ENCODE measurements at regions of chr1 and their contacts with region 1.

Region 1: GRCh38 chr1:2429780-2430591 is 17.6 kb upstream of the PEX10 start:
- DNase-seq: no peak
- H3K4me3 ChIP-seq: no peak overlapping the region
- H3K27ac ChIP-seq: no peak overlapping the region
- H3K4me1 ChIP-seq: peaks cover 0 to 3% of the 10 kb centered on the region in 2 experiments; a peak in 1 of 4 replicates
- H3K27me3 ChIP-seq: peaks cover 11% of the 10 kb centered on the region
- CTCF ChIP-seq: peak; percentile 35; the same call in 1 of the 2 replicates
- EP300 ChIP-seq: no peak
- RAD21 ChIP-seq: no peak

Region 2: DNA sequence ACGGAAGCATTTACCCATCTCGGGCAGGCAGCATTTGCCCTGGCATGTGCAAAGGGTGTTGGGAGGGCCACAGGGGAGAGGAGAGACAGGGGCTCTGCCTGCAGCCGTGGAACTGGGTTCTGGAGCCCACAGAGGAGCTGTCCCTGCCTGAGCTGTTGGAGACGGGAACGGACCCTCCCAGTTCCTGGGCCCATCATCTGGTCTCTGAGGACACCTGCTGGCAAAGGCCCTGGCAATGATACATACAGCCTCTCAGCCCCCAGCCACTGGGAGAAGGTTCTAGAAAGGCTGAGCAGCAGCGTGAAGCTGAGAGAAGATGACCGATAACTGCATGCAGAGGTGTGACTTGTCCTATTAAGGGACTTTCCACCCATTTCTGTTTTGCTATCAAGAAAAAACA is 266.8 kb before region 1 on chr1:
- CTCF ChIA-PET with region 1: no interaction called
- POLR2A ChIA-PET with region 1: no interaction called
- DNase-seq: no peak
- H3K4me3 ChIP-seq: no peak overlapping the region; a peak in 1 of 4 replicates
- H3K27ac ChIP-seq: no peak overlapping the region
- H3K4me1 ChIP-seq: no peaks in the 10 kb centered on the region; a peak in 1 of 4 replicates
- H3K27me3 ChIP-seq: no peaks in the 10 kb centered on the region
- CTCF ChIP-seq: no peak
- EP300 ChIP-seq: no peak
- RAD21 ChIP-seq: no peak

Region 3: DNA sequence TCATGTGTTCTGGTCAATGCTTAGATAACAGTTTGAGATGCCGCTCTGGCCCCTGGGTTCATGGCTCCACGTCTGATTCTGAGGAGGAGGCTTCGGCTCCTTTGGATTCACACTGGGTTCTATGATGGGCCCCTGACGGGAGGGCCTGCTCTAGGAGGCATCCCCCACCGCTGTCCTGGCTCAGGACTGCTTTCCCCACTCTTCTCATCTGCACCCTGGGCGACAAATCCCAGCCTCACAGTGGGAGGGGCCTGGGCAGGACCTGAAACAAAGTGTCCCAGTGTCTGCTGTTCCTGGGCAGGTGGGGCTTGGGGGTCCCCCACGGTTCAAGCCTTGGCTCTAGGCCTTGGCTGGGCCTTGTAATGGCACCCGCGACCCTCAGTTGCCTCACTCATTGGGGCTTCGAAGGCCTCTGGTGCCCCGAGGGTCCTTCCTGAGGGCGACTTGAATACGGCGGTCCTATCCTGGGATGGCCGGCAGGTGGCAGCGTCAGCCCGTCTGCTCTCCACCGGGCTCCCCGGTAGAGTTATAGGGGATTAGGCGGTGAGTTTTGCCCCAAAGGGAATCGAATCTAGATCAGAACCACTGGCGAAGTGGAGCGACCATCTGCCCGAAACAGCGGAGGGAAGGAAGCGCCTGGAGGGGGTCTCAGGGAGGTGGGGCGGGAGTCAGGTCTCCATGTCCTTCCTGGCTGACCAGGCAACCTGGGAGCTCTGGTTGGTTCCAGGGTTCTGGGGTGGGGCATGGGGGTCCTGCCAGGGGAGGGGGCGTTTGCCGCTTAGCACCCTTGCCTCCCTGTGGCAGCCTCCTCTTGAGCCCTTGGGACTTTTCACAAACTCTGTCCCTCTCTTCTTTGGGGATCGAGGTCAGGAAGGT is 15.7 kb before region 1 on chr1:
- CTCF ChIA-PET with region 1: interaction called, 13 read pairs
- POLR2A ChIA-PET with region 1: interaction called, 4 read pairs
- DNase-seq: peak; percentile 91
- H3K4me3 ChIP-seq: peak overlapping the region in 1 of 2 experiments; percentile 49; a peak in 1 of 4 replicates
- H3K27ac ChIP-seq: no peak overlapping the region; a peak in 1 of 4 replicates
- H3K4me1 ChIP-seq: peaks cover 7 to 32% of the 10 kb centered on the region in 2 experiments; a peak in 1 of 4 replicates
- H3K27me3 ChIP-seq: peaks cover 18% of the 10 kb centered on the region
- CTCF ChIP-seq: peak; percentile 87
- EP300 ChIP-seq: no peak
- RAD21 ChIP-seq: peak; percentile 89

Region 4: DNA sequence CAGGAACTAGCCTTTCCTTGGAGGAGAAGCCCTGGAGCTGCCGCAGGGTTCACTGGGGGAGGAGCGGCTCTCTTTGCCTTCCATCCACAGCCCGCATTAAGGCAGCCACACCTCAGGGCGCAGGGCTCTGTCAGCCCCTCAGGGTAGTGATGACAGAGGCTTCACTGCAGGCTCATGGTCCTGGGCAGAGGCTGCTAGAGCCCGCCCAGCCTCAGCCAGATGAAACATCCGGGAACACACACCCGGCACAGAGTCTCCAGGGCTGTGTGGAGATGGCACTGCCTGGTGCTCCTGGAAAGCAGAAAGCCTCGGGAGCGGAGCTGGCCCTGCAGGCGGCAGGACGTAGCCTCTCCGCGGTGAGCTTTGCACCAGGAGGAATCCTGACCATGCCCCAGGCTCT is 11.8 kb after region 1 on chr1:
- CTCF ChIA-PET with region 1: interaction called, 13 read pairs
- POLR2A ChIA-PET with region 1: no interaction called
- DNase-seq: no peak
- H3K4me3 ChIP-seq: no peak overlapping the region
- H3K27ac ChIP-seq: no peak overlapping the region
- H3K4me1 ChIP-seq: no peaks in the 10 kb centered on the region
- H3K27me3 ChIP-seq: peaks cover 9% of the 10 kb centered on the region; the same call in 1 of the 2 replicates
- CTCF ChIP-seq: no peak
- EP300 ChIP-seq: no peak
- RAD21 ChIP-seq: no peak

Region 5: GRCh38 chr1:2650967-2651645 is 221.1 kb after region 1 on chr1:
- CTCF ChIA-PET with region 1: no interaction called
- POLR2A ChIA-PET with region 1: no interaction called
- DNase-seq: no peak
- H3K4me3 ChIP-seq: no peak overlapping the region
- H3K27ac ChIP-seq: no peak overlapping the region
- H3K4me1 ChIP-seq: no peaks in the 10 kb centered on the region
- H3K27me3 ChIP-seq: no peaks in the 10 kb centered on the region
- CTCF ChIP-seq: no peak
- EP300 ChIP-seq: no peak
- RAD21 ChIP-seq: no peak

Measured in SK-N-SH (cell line).